Heart left ventricle (tissue), 16 donors: ENCODE measurements at regions of chr21 and their contacts with region 1.

Region 1: DNA sequence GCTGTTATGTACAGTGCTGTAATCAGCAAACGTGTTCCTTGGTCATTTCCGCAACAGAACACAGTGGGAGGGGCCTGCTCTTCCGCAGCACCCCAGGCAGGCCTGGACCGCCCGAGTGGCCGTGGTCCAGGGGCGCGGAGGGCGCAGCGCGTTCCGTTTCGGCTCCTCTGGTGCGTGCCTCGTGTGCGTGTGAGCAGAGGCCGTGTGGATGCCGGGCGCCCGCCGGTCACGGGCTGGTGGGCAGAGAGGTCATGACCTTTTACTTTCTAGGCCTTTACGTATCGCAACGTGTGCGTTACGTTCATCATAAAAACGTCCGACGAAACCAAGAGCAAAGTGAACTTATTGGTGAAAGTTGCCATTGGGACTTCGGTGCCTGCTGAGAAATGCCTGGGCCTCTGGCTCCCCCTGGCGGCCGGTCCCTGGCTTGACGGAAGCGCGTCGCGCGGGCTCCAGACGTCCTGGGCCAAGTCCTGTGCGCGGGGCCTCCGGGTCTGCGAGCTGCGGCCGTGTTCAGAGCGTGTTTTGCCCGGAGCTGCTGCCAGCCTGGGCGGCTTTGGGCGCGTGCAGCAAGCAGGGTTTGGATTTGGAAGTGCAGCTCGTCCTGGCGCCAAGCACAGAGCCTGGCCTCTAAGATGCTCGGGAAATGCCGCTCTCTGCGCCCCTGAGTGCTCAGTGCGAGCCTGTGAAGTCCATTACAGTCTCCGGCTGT is 34.4 kb downstream of the COL18A1 start:
- DNase-seq: peak; percentile 79 to 91 (median 84)
- ATAC-seq: peak; percentile 71 to 88 (median 82)
- H3K4me3 ChIP-seq: peak overlapping the region in 11 of 12 donors; percentile 2 to 58 (median 43)
- H3K27ac ChIP-seq: peak overlapping the region; percentile 56 to 91 (median 80)
- H3K4me1 ChIP-seq: peaks cover 3 to 30% (median 16%) of the 10 kb centered on the region in 12 donors
- H3K27me3 ChIP-seq: no peaks in the 10 kb centered on the region
- CTCF ChIP-seq: peak; percentile 95 to 99 (median 98)
- POLR2A ChIP-seq: peak in 1 of 2 donors; percentile 42

Region 2: GRCh38 chr21:44939532-44940115 is 499.7 kb before region 1 on chr21 and contains the start of gene SLX9:
- intact Hi-C with region 1: loop called in 1 of 10 experiments (anchors 10 kb)
- DNase-seq: peak; percentile 72 to 90 (median 83)
- ATAC-seq: peak; percentile 58 to 92 (median 87)
- H3K4me3 ChIP-seq: peak within 1 kb of the TSS; percentile 74 to 99 (median 82)
- H3K27ac ChIP-seq: peak within 1 kb of the TSS; percentile 9 to 88 (median 78)
- H3K4me1 ChIP-seq: peaks cover 0 to 37% (median 29%) of the 10 kb centered on the region in 12 donors
- H3K27me3 ChIP-seq: peaks cover 0 to 5% (median 0%) of the 10 kb centered on the region in 9 donors
- CTCF ChIP-seq: no peak
- POLR2A ChIP-seq: peak in 1 of 2 donors; percentile 70
- total RNA-seq, gene SLX9: 38.5 to 53.1 (median 47.1) TPM

Region 3: GRCh38 chr21:45266518-45267389 is 172.6 kb before region 1 on chr21:
- intact Hi-C with region 1: no loop called
- DNase-seq: no peak
- ATAC-seq: peak in 2 of 4 donors; percentile 43 to 46
- H3K4me3 ChIP-seq: no peak overlapping the region
- H3K27ac ChIP-seq: peak overlapping the region in 1 of 12 donors; percentile 1
- H3K4me1 ChIP-seq: peaks cover 0 to 4% (median 0%) of the 10 kb centered on the region in 12 donors
- H3K27me3 ChIP-seq: no peaks in the 10 kb centered on the region
- CTCF ChIP-seq: no peak
- POLR2A ChIP-seq: no peak

Region 4: GRCh38 chr21:45287438-45288391 is 151.6 kb before region 1 on chr21 and contains the start of gene POFUT2:
- intact Hi-C with region 1: loop called (anchors 1 to 2 kb)
- DNase-seq: peak; percentile 97 to 99 (median 97)
- ATAC-seq: peak; percentile 83 to 93 (median 89)
- H3K4me3 ChIP-seq: peak within 1 kb of the TSS; percentile 47 to 91 (median 76)
- H3K27ac ChIP-seq: peak within 1 kb of the TSS; percentile 50 to 90 (median 80)
- H3K4me1 ChIP-seq: peaks cover 0 to 38% (median 25%) of the 10 kb centered on the region in 12 donors
- H3K27me3 ChIP-seq: no peaks in the 10 kb centered on the region
- CTCF ChIP-seq: no peak
- POLR2A ChIP-seq: peak; percentile 37 to 88
- total RNA-seq, gene POFUT2: 10.8 to 22.0 (median 18.5) TPM

Region 5: DNA sequence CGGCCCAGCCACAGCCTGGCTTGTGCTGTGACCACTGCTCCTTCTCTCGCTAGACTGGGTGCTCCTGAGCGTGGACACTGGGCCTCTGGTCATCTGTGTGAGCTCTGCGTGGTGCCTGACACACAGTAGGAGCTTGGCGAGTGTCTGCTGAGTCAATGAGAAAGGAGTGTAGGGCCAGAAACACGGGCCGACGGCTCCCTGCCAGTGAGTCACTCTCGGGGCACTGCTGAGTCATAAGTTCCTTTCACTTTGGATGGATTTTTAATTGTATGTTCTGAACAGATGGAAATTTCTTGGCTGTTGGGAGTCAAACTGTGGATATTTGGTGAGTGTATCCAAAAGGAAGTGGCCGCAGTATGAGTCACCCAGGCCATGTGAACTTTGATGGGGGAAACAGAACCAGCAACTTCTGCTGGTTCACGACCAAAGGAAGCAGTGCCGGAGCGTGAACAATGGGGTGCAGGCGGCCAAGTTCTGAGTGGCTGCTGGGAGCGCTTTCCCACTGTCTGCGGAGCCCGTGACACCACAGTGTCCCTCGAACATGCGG is 75.3 kb before region 1 on chr21:
- intact Hi-C with region 1: loop called in 1 of 10 experiments (anchors 2 kb)
- DNase-seq: peak; percentile 88 to 93 (median 89)
- ATAC-seq: peak; percentile 81 to 91 (median 84)
- H3K4me3 ChIP-seq: peak overlapping the region in 6 of 12 donors; percentile 4 to 33 (median 10)
- H3K27ac ChIP-seq: peak overlapping the region; percentile 87 to 99 (median 94)
- H3K4me1 ChIP-seq: peaks cover 2 to 60% (median 40%) of the 10 kb centered on the region in 12 donors
- H3K27me3 ChIP-seq: no peaks in the 10 kb centered on the region
- CTCF ChIP-seq: no peak
- POLR2A ChIP-seq: peak in 1 of 2 donors; percentile 48

Region 6: GRCh38 chr21:45404730-45405270 is 34.5 kb before region 1 on chr21 and contains the start of gene COL18A1:
- intact Hi-C with region 1: loop called in 2 of 10 experiments (anchors 5 kb)
- DNase-seq: peak; percentile 75 to 87 (median 80)
- ATAC-seq: peak in 3 of 4 donors; percentile 30 to 59 (median 56)
- H3K4me3 ChIP-seq: peak within 1 kb of the TSS; percentile 43 to 97 (median 69)
- H3K27ac ChIP-seq: peak within 1 kb of the TSS; percentile 57 to 89 (median 80)
- H3K4me1 ChIP-seq: peaks cover 0 to 57% (median 41%) of the 10 kb centered on the region in 12 donors
- H3K27me3 ChIP-seq: peaks cover 0 to 24% (median 0%) of the 10 kb centered on the region in 9 donors
- CTCF ChIP-seq: no peak
- POLR2A ChIP-seq: no peak
- total RNA-seq, gene COL18A1: 31.7 to 109 (median 59.0) TPM